A549 (cell line): ENCODE measurements at regions of chr6 and their contacts with region 1.

Region 1: GRCh38 chr6:159608961-159609651 is 83.9 kb downstream of the SOD2 start:
- DNase-seq: peak; percentile 8 to 41
- ATAC-seq: peak in 1 of 2 experiments; percentile 65; a peak in 4 of 6 replicates
- H3K4me3 ChIP-seq: no peak overlapping the region
- H3K27ac ChIP-seq: no peak overlapping the region
- H3K4me1 ChIP-seq: no peaks in the 10 kb centered on the region
- CTCF ChIP-seq: peak; percentile 29; the same call in 1 of the 3 replicates
- EP300 ChIP-seq: no peak
- POLR2A ChIP-seq: no peak
- RAD21 ChIP-seq: peak; percentile 44 to 62; a peak in 4 of 5 replicates

Region 2: GRCh38 chr6:159217595-159218275 is 391.4 kb before region 1 on chr6:
- CTCF ChIA-PET with region 1: interaction called, 10 read pairs
- POLR2A ChIA-PET with region 1: no interaction called
- DNase-seq: peak; percentile 45 to 62
- ATAC-seq: peak; percentile 91 to 97
- H3K4me3 ChIP-seq: no peak overlapping the region
- H3K27ac ChIP-seq: no peak overlapping the region
- H3K4me1 ChIP-seq: no peaks in the 10 kb centered on the region
- CTCF ChIP-seq: peak; percentile 36; the same call in 2 of the 3 replicates
- EP300 ChIP-seq: no peak
- POLR2A ChIP-seq: no peak
- RAD21 ChIP-seq: peak; percentile 45 to 53; a peak in 3 of 5 replicates